MCF 10A (cell line): ENCODE measurements at regions of chr2 and their contacts with region 1.

Region 1: GRCh38 chr2:53535234-53535840 is 232.3 kb upstream of the CHAC2 start:
- DNase-seq: no peak
- H3K4me3 Mint-ChIP-seq: no peak overlapping the region
- H3K27ac Mint-ChIP-seq: no peak overlapping the region
- H3K4me1 Mint-ChIP-seq: no peaks in the 10 kb centered on the region
- H3K27me3 Mint-ChIP-seq: no peaks in the 10 kb centered on the region
- CTCF ChIP-seq: no peak

Region 2: DNA sequence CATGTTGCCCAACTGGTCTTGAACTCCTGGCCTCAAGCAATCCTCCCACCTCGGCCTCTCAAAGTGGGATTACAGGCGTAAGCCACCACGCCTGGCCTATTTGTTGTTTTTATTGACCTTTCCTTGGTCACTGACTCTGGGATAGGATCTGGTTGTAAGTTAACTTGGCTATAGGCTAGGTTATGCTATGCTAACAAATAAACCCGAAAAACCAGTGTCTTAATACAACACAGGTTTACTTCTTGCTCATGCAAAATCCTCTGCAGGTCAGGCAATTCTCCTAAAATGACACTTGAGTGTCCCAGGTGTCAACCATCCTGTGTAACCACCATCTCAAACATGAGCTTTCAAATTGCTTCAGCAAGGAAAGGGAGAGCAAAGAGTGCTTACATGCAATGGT is 152.7 kb after region 1 on chr2:
- CTCF ChIA-PET with region 1: no interaction called
- POLR2A ChIA-PET with region 1: no interaction called
- intact Hi-C with region 1: loop called (anchors 5 kb)
- DNase-seq: no peak
- H3K4me3 Mint-ChIP-seq: no peak overlapping the region
- H3K27ac Mint-ChIP-seq: no peak overlapping the region
- H3K4me1 Mint-ChIP-seq: no peaks in the 10 kb centered on the region
- H3K27me3 Mint-ChIP-seq: no peaks in the 10 kb centered on the region
- CTCF ChIP-seq: no peak